ENCODE measurements at regions of chr12 and their contacts with region 1.

Region 1: DNA sequence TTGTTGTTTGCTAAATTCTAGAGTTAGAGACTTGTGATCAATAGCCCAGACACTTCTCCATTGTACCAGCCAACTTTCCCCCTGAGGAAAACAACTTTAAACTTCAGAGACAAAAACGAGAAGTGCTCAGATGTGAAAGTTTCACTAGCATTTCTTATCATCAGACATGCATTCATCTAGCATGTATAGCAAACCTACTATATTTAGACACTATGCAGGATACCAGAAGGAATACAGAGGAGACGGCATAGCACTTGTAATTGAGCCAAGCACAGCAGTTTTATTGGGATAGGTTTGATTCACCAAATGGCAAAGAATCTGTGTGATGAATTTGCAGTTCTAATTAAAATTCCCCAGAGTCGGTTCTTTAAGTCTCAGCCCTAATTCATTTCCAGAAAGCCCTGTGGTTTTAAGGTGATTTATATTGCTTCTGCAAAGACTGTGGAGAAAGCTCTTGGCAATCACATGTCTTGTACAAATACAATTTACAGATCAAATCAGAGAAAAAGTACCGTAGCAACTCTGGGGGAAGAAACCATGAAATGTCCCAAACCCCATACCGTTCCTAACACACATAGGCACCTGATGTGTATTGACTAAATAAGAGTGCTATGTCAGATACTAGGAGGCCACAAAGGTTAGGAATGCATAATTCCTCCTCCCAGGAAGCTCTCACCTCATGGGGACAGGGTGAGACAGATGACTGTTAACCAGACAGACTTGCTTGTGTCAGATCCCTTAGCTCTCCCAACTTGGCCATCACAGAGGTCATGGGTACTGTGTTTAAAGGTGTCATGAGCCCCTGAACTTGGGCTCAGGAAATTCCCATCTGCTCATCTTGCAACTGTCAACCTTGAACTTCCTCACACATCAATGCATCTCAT is 69.6 kb upstream of the KRAS start:
- DNase-seq: no peak
- ATAC-seq: peak; percentile 51
- H3K4me3 Mint-ChIP-seq: no peak overlapping the region
- H3K27ac Mint-ChIP-seq: peak overlapping the region; percentile 18
- H3K4me1 Mint-ChIP-seq: peaks cover 49% of the 10 kb centered on the region
- H3K27me3 Mint-ChIP-seq: no peaks in the 10 kb centered on the region
- CTCF ChIP-seq: no peak

Region 2: DNA sequence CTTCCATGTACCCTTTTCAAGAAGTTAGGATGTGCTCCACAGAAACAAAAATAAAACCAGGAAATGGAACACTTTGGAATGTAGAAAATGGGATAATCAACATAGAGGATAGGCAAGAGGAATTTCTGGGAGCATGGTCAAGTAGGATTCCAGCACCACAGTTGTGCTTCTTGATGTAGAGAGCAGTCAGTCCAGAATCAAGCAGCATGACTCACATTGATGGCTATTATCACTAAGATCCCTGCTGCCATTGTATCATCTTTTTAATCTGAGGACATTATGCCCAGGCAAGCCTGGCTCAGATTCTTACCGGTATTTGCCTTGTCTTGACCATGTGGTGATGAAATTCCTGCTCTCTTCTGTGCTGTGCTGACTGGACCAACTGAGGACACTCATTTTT is 119.7 kb before region 1 on chr12:
- CTCF ChIA-PET with region 1: no interaction called
- POLR2A ChIA-PET with region 1: no interaction called
- intact Hi-C with region 1: no loop called
- DNase-seq: no peak
- ATAC-seq: no peak
- H3K4me3 Mint-ChIP-seq: no peak overlapping the region
- H3K27ac Mint-ChIP-seq: no peak overlapping the region
- H3K4me1 Mint-ChIP-seq: peaks cover 20% of the 10 kb centered on the region
- H3K27me3 Mint-ChIP-seq: no peaks in the 10 kb centered on the region
- CTCF ChIP-seq: no peak

Region 3: DNA sequence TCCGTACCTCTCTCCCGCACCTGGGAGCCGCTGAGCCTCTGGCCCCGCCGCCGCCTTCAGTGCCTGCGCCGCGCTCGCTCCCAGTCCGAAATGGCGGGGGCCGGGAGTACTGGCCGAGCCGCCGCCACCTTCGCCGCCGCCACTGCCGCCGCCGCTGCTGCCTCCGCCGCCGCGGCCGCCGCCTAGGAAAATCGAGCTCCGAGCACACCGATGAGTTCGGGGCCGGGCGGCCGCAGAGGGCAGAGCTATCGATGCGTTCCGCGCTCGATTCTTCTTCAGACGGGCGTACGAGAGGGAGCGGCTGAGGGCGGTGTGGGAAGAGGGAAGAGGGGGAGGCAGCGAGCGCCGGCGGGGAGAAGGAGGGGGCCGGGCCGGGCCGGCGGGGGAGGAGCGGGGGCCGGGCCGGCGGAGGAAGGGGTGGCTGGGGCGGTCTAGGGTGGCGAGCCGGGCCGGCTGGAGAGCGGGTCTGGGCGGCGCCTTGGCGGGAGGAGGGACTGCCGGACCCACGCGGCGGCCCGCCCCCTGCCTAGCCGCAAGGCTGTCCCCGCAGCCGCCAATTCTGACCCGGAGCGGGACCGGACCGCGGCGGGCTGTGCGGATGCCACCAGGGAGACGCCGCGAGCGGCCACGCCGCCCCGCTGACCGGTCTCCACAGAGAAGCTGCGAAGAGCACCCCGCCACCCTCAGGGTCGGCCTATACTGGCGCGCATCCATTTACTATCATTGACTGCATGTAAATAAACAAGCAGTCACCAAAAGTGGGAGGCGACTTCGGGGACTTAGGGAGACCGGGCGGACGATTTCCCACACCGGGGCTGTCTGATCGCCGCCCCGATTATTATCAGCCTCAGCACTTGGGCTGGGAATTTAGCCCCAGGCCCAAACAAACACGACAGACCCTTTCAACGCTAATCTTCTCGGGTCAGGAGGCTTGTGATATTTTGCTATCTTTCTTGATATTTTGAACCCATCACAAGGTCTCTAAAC is 69.3 kb before region 1 on chr12 and contains the start of gene KRAS:
- CTCF ChIA-PET with region 1: no interaction called
- POLR2A ChIA-PET with region 1: interaction called, 3 read pairs
- intact Hi-C with region 1: loop called (anchors 5 kb)
- DNase-seq: peak; percentile 94
- ATAC-seq: peak; percentile 92
- H3K4me3 Mint-ChIP-seq: peak within 1 kb of the TSS; percentile 94
- H3K27ac Mint-ChIP-seq: peak within 1 kb of the TSS; percentile 94
- H3K4me1 Mint-ChIP-seq: peaks cover 32% of the 10 kb centered on the region
- H3K27me3 Mint-ChIP-seq: no peaks in the 10 kb centered on the region
- CTCF ChIP-seq: no peak
- total RNA-seq, gene KRAS: 17.0 to 19.0 TPM

Region 4: DNA sequence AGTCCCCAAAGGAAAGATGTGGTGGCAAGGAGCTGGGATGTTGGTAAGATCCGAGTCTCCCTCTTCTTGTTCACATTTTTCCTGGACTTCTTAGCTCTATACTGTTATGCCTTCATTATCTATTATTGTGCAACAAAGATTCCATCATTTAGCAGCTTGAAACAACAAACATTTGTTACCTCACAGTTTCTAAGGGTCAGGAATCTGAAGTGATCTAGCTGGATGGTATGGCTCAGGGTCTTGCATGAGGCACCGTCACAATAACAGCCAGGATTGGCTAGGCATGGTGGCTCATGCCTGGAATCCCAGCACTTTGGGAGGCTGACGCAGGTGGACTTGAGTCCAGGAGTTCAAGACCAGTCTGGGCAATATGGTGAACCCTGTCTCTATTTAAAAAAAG is 18.6 kb before region 1 on chr12:
- CTCF ChIA-PET with region 1: no interaction called
- POLR2A ChIA-PET with region 1: no interaction called
- intact Hi-C with region 1: no loop called
- DNase-seq: no peak
- ATAC-seq: no peak
- H3K4me3 Mint-ChIP-seq: no peak overlapping the region
- H3K27ac Mint-ChIP-seq: no peak overlapping the region
- H3K4me1 Mint-ChIP-seq: no peaks in the 10 kb centered on the region
- H3K27me3 Mint-ChIP-seq: no peaks in the 10 kb centered on the region
- CTCF ChIP-seq: no peak

Region 5: DNA sequence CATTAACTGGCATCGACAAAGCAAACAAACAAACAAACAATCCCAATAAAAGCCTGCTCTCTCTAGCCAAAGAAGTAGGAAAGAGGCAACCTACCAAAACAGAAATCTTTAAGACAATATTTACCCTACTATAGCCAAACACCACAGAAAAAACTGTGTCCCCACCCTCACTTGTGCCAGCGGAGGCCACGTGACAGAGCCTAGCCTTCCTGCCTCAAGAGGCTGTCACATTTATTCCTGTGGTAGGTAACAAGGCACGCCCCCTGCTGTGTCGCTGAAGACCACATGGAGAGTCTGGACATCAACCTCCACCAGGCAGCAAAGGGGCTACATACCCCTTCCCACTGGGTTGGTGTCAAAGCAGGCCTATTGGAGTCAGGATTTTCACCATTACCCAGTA is 84.6 kb after region 1 on chr12:
- CTCF ChIA-PET with region 1: no interaction called
- POLR2A ChIA-PET with region 1: no interaction called
- intact Hi-C with region 1: no loop called
- DNase-seq: no peak
- ATAC-seq: no peak
- H3K4me3 Mint-ChIP-seq: no peak overlapping the region
- H3K27ac Mint-ChIP-seq: no peak overlapping the region
- H3K4me1 Mint-ChIP-seq: no peaks in the 10 kb centered on the region
- H3K27me3 Mint-ChIP-seq: no peaks in the 10 kb centered on the region
- CTCF ChIP-seq: no peak

Region 6: DNA sequence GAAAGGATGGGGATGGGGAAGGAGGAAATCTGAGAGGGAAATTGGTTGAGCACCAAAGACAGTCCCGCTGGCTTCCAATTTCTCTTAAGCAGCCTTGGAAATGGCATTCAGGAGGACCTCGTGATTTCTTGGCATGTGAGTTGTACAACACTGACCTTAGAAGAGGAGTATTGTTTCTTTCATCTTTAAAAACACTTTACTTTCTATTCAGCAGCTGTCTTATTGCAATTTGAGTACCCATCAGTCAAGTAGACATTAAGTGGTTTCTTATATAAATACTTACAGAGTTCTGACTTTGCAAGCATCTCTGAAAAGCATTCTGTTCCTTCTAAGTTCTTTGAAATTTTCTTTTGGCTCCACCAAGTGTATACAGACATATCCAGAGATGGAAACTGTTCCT is 149.5 kb after region 1 on chr12:
- CTCF ChIA-PET with region 1: no interaction called
- POLR2A ChIA-PET with region 1: no interaction called
- intact Hi-C with region 1: no loop called
- DNase-seq: no peak
- ATAC-seq: no peak
- H3K4me3 Mint-ChIP-seq: no peak overlapping the region
- H3K27ac Mint-ChIP-seq: no peak overlapping the region
- H3K4me1 Mint-ChIP-seq: no peaks in the 10 kb centered on the region
- H3K27me3 Mint-ChIP-seq: no peaks in the 10 kb centered on the region
- CTCF ChIP-seq: no peak